Activated CD4-positive, alpha-beta T cell treated with anti-CD3 and anti-CD28 coated beads, Interleukin-2, amount 10 ng/mL, durations not matched to agents 7 days and 5 days (primary cell): ENCODE measurements at regions of chr6 and their contacts with region 1.

Region 1: GRCh38 chr6:154367839-154368695 is 11.5 kb upstream of the IPCEF1 start:
- DNase-seq: no peak
- H3K4me3 Mint-ChIP-seq: no peak overlapping the region
- H3K27ac Mint-ChIP-seq: no peak overlapping the region
- H3K4me1 Mint-ChIP-seq: no peaks in the 10 kb centered on the region
- H3K27me3 Mint-ChIP-seq: peaks cover 2% of the 10 kb centered on the region

Region 2: DNA sequence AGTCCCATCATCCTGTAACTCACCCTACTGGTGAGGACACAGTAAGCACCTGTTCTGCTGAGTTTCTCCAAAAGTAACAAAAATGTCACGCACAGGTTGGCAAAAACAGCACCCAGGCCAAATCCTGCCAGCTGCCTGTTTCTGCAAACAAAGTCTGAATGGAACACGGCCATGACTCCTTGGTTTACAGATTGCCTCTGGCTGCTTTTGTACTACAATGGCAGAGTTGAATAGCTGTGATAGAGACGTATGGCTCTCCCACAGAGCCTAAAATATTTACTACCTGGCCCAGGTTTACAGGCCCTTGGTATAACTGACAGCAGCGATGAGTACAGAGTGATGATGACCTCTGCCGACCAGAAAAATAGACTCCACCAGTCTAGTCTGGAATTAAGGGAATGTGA is 89.8 kb after region 1 on chr6:
- CTCF ChIA-PET with region 1: no interaction called
- POLR2A ChIA-PET with region 1: interaction called, 15 read pairs
- DNase-seq: no peak
- H3K4me3 Mint-ChIP-seq: no peak overlapping the region
- H3K27ac Mint-ChIP-seq: no peak overlapping the region
- H3K4me1 Mint-ChIP-seq: no peaks in the 10 kb centered on the region
- H3K27me3 Mint-ChIP-seq: peaks cover 5% of the 10 kb centered on the region